Calu3 (cell line): ENCODE measurements at regions of chr5 and their contacts with region 1.

Region 1: DNA sequence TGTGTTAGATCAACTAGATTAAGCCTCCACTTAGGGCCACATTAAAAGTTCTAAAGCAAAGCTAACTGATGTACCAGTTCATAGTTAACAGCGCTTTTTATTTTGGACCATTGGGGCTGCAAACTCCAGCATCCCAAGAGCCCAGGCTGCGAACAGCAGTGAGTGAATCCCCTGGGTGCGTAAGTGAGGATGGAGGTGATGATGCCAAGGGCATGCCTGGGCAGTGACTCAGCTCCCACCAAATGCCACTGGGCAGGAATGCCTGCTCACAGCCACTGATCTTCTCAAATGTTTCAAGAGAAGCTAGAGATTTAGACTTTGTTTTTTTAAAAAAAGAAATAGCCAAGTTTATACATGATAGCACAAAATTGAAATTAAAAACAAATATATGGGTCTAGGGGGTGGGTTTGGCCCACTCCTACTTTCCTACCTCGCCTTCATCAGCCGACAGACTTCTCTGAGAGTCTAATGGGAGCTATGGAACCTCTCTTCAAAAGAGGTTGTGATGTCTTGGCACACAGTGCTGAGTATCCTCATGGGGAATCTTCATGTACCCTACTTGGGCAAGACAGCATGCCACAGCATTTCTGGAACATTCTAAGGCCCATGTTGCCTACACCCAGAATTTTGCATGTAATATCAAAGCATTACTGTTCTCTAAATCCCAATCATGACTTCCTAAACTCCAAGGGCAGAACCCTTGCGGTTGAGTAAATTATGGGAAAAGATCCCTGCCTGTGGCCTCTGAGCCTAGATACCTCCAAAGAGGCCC is 398.1 kb downstream of the EBF1 start:
- DNase-seq: no peak
- H3K4me3 Mint-ChIP-seq: no peak overlapping the region
- H3K27ac Mint-ChIP-seq: no peak overlapping the region
- H3K4me1 Mint-ChIP-seq: no peaks in the 10 kb centered on the region
- H3K27me3 Mint-ChIP-seq: peaks cover 46% of the 10 kb centered on the region
- CTCF ChIP-seq: no peak

Region 2: GRCh38 chr5:158619083-158619788 is 82.4 kb before region 1 on chr5:
- CTCF ChIA-PET with region 1: no interaction called
- intact Hi-C with region 1: no loop called
- DNase-seq: no peak
- H3K4me3 Mint-ChIP-seq: no peak overlapping the region
- H3K27ac Mint-ChIP-seq: no peak overlapping the region
- H3K4me1 Mint-ChIP-seq: no peaks in the 10 kb centered on the region
- H3K27me3 Mint-ChIP-seq: no peaks in the 10 kb centered on the region
- CTCF ChIP-seq: no peak

Region 3: DNA sequence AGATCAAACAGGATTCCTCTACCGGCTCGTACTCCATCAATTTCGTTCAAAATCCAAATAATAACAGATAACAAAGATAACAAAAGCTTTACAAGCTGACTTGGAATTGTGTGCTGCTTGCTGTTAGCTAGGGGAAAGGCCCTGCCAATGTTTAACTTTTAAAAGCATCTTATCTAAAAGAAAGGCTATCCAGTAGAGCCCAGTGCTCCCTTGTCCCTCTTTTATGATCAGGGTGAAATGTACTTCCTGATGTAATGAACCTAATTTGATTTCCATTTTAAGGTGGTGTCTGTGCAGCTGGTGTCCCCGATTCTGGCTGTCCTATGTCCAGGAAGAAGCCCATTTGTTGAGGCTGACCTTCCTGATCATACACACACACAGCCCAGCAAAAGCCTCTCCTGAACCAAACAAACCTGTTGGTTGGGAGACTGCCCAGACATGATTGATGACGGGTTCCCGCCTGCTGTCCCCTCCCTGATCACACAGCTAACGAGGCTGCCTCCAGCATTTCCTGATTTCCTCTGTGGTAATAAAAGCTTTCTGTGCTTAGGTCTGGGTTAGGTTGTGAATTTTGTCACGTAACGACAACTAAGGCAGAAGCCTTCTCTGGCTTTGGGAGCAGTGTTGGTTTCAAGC is 1363.5 kb after region 1 on chr5:
- CTCF ChIA-PET with region 1: interaction called, 10 read pairs
- intact Hi-C with region 1: no loop called
- DNase-seq: peak; percentile 74
- H3K4me3 Mint-ChIP-seq: no peak overlapping the region
- H3K27ac Mint-ChIP-seq: peak overlapping the region; percentile 85
- H3K4me1 Mint-ChIP-seq: peaks cover 16% of the 10 kb centered on the region
- H3K27me3 Mint-ChIP-seq: no peaks in the 10 kb centered on the region
- CTCF ChIP-seq: no peak